Activated naive CD4-positive, alpha-beta T cell treated with anti-CD3 and anti-CD28 coated beads, Interleukin-2, amount 10 ng/mL, durations not matched to agents 7 days and 5 days (primary cell): ENCODE measurements at regions of chr20 and their contacts with region 1.

Region 1: DNA sequence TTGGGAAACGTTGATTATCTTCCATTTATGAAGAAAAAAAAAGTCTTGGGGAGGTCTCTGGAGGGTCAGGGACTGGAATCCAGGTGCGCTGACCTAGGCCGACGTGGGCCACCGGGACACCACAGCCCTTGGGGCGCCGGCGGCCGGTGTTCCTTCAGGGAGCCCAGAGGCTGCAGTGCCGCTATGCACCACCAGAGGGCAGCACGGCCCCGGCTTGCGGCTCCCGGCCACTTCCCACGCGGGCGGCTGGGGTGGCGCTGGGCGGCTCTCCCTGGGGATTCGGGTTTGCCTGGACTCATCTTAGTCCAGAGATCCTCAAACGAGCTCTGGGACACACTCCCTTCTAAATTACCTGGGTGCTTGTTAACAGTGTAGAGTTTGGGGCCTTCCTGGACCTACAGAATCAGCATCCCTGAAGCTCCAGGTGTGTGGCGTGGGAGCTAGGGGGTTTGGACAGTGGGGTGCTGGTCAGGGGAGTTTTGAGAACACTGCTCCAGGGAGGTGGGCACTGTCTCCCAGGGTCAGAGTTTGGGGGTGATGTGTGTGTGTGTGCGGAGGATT is 23.0 kb upstream of the GTSF1L start:
- DNase-seq: peak; percentile 84
- H3K4me3 Mint-ChIP-seq: no peak overlapping the region
- H3K27ac Mint-ChIP-seq: peak overlapping the region; percentile 64
- H3K4me1 Mint-ChIP-seq: peaks cover 40% of the 10 kb centered on the region
- H3K27me3 Mint-ChIP-seq: no peaks in the 10 kb centered on the region

Region 2: DNA sequence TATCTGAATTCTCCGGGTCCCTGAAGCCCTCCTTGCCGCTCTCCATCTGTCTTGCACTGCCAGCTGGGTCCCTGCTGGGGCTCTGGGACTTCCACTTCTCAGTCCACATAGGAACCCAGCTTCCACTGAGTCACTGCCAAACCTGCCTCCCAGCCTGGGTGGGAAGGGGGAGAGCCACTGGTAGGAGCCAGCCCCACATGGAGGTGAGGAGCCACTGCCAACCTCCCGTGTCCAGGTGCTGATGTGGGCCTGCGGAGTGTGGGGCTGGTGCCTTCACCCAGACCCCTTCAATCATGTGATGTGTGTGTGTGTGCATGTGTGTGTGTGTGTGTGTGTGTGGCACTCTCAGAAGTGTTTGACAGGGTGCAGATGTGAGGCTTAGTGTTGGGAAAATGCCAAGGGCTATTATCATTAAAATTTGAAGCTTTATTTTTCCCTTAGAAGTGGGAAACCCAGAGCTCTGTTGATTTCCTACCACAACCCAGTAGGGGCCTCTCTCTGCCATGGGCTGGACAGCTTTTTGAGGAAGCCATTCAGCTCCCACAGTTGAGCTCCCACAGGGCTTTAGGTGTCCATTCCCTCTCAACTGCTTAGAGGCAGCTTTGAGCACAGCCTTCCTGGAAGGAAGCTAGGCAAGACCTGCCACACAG is 200.3 kb before region 1 on chr20:
- CTCF ChIA-PET with region 1: no interaction called
- DNase-seq: no peak
- H3K4me3 Mint-ChIP-seq: no peak overlapping the region
- H3K27ac Mint-ChIP-seq: no peak overlapping the region
- H3K4me1 Mint-ChIP-seq: no peaks in the 10 kb centered on the region
- H3K27me3 Mint-ChIP-seq: no peaks in the 10 kb centered on the region

Region 3: DNA sequence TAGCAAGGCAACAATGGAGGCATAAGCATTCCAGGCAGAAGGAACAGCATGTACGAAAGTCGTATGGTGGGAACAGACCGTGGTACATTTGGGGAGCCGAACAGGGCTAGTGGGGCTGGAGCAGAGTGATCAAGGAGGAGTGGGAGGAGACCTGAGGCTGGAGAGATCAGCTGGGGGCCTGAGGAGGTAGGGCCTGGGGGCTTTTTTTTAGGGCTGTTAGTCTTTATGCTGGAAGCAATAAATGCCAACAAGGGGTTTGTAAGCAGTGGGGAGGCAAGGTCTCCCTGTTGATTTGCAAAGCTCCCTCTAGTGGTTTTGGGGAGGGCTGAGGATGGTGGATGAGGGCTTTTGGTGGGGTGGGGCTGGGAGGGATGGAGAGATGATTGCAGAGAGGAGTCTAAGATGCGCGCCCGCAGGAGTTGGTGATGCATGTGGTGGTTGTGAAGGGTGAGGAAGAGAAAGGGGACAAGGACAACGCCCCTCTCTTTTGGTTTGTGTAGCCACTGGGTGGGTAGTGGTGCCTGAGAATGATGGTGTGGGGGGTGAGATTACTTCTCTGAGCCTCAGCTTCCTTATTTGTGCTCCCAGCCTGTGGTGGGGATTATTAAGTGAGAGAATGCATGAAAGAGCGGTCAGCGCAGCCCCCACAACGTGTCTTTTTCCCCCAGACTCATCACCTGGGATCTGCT is 90.7 kb after region 1 on chr20:
- CTCF ChIA-PET with region 1: interaction called, 65 read pairs
- DNase-seq: peak; percentile 53
- H3K4me3 Mint-ChIP-seq: no peak overlapping the region
- H3K27ac Mint-ChIP-seq: no peak overlapping the region
- H3K4me1 Mint-ChIP-seq: peaks cover 46% of the 10 kb centered on the region
- H3K27me3 Mint-ChIP-seq: peaks cover 3% of the 10 kb centered on the region

Region 4: GRCh38 chr20:44069203-44070011 is 319.6 kb after region 1 on chr20:
- CTCF ChIA-PET with region 1: interaction called, 28 read pairs
- DNase-seq: peak; percentile 83
- H3K4me3 Mint-ChIP-seq: peak overlapping the region; percentile 78
- H3K27ac Mint-ChIP-seq: peak overlapping the region; percentile 100
- H3K4me1 Mint-ChIP-seq: peaks cover 73% of the 10 kb centered on the region
- H3K27me3 Mint-ChIP-seq: peaks cover 69% of the 10 kb centered on the region

Region 5: DNA sequence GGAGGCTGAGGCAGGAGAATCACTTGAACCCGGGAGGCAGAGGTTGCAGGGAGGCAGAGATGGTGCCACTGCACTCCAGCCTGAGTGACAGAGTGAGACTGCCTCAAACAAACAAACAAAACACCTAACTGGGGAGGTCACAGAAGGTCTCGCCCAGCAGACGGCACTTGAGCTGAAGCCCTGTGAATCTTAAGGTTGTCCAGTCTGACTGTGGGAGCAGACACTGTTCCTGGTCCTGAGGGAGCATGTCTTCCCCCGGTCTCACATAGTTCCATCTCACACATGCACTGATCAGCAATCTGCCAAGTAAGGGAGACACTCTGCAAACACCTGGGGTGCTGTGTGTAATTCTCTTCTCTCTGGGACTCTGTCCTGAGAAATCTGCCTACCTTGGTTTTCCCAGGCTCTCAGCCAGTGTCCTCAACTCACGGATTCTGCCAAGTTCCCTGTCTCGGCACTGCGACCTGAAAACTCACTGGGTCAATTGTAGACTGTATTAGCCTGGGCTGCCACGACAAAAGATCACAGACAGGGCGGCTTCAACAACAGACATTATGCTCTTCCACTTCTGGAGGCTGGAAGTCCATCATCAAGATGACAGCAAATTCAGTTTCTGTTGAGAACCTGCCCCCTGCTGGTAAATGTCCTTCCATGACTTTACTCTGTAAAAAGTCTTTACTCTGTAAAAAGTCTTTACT is 342.9 kb after region 1 on chr20:
- CTCF ChIA-PET with region 1: interaction called, 26 read pairs
- DNase-seq: peak; percentile 63
- H3K4me3 Mint-ChIP-seq: no peak overlapping the region
- H3K27ac Mint-ChIP-seq: no peak overlapping the region
- H3K4me1 Mint-ChIP-seq: peaks cover 3% of the 10 kb centered on the region
- H3K27me3 Mint-ChIP-seq: peaks cover 32% of the 10 kb centered on the region